ENCODE measurements at regions of chr3 and their contacts with region 1.

Region 1: DNA sequence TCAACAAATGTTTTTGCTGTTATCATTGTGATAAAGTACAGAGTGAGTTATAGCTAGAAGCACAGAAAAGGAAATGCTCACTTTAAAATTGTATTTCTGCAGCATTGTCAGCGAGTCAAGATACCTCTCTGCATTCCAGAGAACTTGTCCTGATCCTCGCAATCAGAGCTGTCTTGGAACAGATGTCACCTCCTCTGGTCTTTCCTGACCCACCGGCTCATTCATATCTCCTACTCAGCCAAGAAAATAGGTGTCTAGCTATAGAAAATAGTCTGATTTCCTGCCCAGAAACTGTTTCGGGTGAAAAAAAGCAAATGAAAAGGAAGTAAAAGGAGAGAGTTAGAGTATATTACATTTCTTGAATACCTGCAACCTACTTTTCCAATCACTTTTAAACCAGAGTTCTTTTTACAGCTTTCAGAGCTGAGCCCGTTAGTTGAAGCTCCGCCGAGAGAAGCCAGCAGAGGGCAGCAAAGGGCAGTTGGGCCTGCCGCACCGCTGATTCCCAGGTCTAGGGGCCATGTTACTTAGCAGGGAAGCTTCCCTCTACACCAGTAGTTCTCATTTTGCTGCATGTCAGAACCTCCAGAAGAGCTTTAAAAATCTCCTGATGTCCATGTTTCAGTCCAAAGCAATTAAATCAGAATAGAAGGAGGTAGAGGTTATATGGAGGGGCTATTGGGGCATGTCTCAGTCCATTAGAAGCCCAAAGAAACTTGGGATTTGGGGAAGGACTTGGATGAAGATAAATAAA is 185.7 kb upstream of the THRB start:
- DNase-seq: peak in 1 of 2 experiments; percentile 12
- H3K4me3 ChIP-seq: no peak overlapping the region
- H3K27ac ChIP-seq: no peak overlapping the region
- H3K4me1 ChIP-seq: peaks cover 24% of the 10 kb centered on the region
- H3K27me3 ChIP-seq: no peaks in the 10 kb centered on the region
- CTCF ChIP-seq: peak; percentile 56; the same call in 1 of the 2 replicates

Region 2: GRCh38 chr3:23999012-23999641 is 681.3 kb before region 1 on chr3:
- CTCF ChIA-PET with region 1: interaction called, 8 read pairs
- POLR2A ChIA-PET with region 1: no interaction called
- intact Hi-C with region 1: loop called (anchors 1 kb)
- DNase-seq: peak in 1 of 2 experiments; percentile 76
- H3K4me3 ChIP-seq: no peak overlapping the region
- H3K27ac ChIP-seq: no peak overlapping the region
- H3K4me1 ChIP-seq: no peaks in the 10 kb centered on the region
- H3K27me3 ChIP-seq: no peaks in the 10 kb centered on the region
- CTCF ChIP-seq: peak; percentile 98

Region 3: GRCh38 chr3:24145981-24146822 is 534.2 kb before region 1 on chr3:
- CTCF ChIA-PET with region 1: no interaction called
- POLR2A ChIA-PET with region 1: no interaction called
- intact Hi-C with region 1: loop called (anchors 10 kb)
- DNase-seq: peak; percentile 52 to 84
- H3K4me3 ChIP-seq: no peak overlapping the region
- H3K27ac ChIP-seq: peak overlapping the region; percentile 85
- H3K4me1 ChIP-seq: peaks cover 44% of the 10 kb centered on the region
- H3K27me3 ChIP-seq: no peaks in the 10 kb centered on the region
- CTCF ChIP-seq: no peak

Region 4: DNA sequence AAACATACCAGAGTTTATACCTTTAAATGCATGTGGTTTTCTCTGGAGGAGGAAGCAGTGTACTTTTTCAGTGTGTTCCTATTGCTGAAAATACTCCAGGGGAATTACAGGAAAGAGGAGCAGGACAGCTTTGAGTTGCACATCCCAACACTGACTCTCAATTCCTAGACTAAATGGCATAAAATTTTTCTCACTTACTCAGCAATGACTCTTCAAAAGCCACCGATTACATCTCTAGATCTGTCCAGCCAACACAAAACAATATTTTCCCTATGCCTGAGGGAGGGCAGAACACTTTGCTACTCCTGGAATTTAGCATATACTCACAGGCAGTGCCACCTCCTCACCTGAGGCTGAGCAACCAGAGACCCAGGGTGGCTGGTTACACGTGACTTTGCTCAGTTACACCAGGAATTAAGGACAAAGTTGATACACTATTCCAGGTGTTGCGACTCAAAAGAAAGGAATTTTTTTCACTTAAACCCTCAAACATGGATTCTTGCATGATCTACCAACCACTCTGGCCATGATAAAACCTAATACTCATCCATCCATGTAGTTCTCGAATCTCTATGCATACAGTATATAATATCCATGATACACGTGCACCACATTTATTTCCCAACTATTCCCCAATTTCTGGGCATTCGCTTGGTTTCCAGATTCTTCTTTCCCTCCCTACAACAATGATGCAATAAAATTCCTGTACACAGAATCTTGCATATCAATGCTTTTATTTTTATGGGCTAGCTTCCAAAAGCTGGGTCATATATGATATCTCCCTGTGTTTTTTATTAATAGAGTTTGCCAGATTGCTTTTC is 380.4 kb before region 1 on chr3:
- CTCF ChIA-PET with region 1: interaction called, 4 read pairs
- POLR2A ChIA-PET with region 1: no interaction called
- intact Hi-C with region 1: loop called (anchors 1 kb)
- DNase-seq: peak; percentile 75 to 91
- H3K4me3 ChIP-seq: no peak overlapping the region
- H3K27ac ChIP-seq: peak overlapping the region; percentile 72
- H3K4me1 ChIP-seq: peaks cover 24% of the 10 kb centered on the region
- H3K27me3 ChIP-seq: no peaks in the 10 kb centered on the region
- CTCF ChIP-seq: no peak

Region 5: DNA sequence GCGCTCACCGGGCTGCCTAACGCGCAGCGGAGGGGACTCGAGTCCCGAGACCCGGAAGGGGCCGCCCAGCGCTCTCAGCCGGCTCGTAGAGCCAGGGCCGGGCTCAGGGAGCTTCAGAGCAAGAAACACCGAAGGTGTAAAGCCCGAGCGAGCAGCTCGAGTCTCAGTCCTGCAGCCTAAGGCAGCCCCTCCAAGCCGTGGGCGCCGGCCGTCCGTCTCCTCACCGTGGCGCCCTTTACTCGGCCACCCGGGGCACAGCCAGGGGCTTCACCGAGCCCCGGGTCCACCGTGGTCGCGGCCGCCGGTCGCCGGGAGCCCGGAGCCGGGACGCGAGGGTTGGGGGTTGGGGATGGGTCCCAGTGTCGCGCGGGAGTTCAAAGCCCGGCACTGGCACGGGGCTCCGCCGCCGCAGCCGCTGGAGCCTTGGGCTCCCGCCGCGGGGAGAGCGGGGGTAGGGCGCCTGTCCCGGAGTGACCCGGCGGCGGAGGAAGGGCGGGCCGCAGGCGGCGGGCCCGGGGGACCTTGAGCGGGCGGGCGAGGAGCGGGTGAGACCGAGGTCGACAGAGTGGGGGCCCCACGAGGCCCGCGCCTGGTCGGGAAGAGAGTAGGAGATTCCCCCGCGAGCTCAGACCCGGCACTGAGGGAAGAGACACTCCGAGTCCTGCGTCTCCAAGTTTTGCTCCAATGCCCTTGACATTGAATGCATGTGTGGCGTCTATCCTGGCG is 158.8 kb before region 1 on chr3:
- CTCF ChIA-PET with region 1: no interaction called
- POLR2A ChIA-PET with region 1: no interaction called
- intact Hi-C with region 1: loop called (anchors 5 kb)
- DNase-seq: peak in 1 of 2 experiments; percentile 51
- H3K4me3 ChIP-seq: peak overlapping the region; percentile 87
- H3K27ac ChIP-seq: peak overlapping the region; percentile 56
- H3K4me1 ChIP-seq: peaks cover 37% of the 10 kb centered on the region
- H3K27me3 ChIP-seq: no peaks in the 10 kb centered on the region
- CTCF ChIP-seq: no peak; the same call in 1 of the 2 replicates

Region 6: GRCh38 chr3:24628523-24629258 is 51.7 kb before region 1 on chr3:
- CTCF ChIA-PET with region 1: no interaction called
- POLR2A ChIA-PET with region 1: no interaction called
- intact Hi-C with region 1: no loop called
- DNase-seq: no peak
- H3K4me3 ChIP-seq: no peak overlapping the region
- H3K27ac ChIP-seq: no peak overlapping the region
- H3K4me1 ChIP-seq: no peaks in the 10 kb centered on the region
- H3K27me3 ChIP-seq: no peaks in the 10 kb centered on the region
- CTCF ChIP-seq: no peak

Region 7: DNA sequence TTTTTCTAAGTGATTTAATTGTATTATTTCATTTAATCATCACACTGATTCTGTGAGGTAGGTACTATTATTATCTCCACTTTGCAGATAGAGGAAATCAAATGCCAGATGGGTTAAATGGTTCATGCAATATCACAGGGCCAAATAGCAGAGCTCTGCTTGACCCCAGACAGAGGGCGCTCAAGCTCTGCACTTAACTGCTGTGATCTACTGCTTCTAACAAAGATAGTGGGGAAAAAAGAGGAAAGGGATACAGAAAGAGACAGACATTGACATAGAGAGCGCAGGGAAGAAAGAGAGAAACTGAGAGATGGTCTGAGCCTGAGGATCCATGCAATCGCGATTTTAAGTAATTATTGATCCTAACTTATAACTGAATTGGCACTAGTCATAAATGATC is 93.4 kb after region 1 on chr3:
- CTCF ChIA-PET with region 1: no interaction called
- POLR2A ChIA-PET with region 1: no interaction called
- intact Hi-C with region 1: loop called (anchors 5 kb)
- DNase-seq: peak in 1 of 2 experiments; percentile 31
- H3K4me3 ChIP-seq: no peak overlapping the region
- H3K27ac ChIP-seq: no peak overlapping the region
- H3K4me1 ChIP-seq: no peaks in the 10 kb centered on the region
- H3K27me3 ChIP-seq: no peaks in the 10 kb centered on the region
- CTCF ChIP-seq: peak; percentile 75

Region 8: GRCh38 chr3:25306066-25306465 is 625.7 kb after region 1 on chr3:
- CTCF ChIA-PET with region 1: no interaction called
- POLR2A ChIA-PET with region 1: no interaction called
- intact Hi-C with region 1: no loop called
- DNase-seq: no peak
- H3K4me3 ChIP-seq: no peak overlapping the region
- H3K27ac ChIP-seq: no peak overlapping the region
- H3K4me1 ChIP-seq: no peaks in the 10 kb centered on the region
- H3K27me3 ChIP-seq: no peaks in the 10 kb centered on the region
- CTCF ChIP-seq: no peak

Measured in PC-9 (cell line).